ENCODE measurements at regions of chr1 and their contacts with region 1.

Region 1: GRCh38 chr1:53715478-53715877 is 23.5 kb downstream of the GLIS1 start:
- DNase-seq: peak; percentile 29 to 84
- H3K4me3 ChIP-seq: no peak overlapping the region
- H3K27ac ChIP-seq: no peak overlapping the region
- H3K4me1 ChIP-seq: no peaks in the 10 kb centered on the region; a peak in 3 of 7 replicates
- H3K27me3 ChIP-seq: no peaks in the 10 kb centered on the region
- CTCF ChIP-seq: peak; percentile 66 to 90 (median 78)
- EP300 ChIP-seq: no peak
- POLR2A ChIP-seq: no peak
- RAD21 ChIP-seq: peak; percentile 45 to 64

Region 2: DNA sequence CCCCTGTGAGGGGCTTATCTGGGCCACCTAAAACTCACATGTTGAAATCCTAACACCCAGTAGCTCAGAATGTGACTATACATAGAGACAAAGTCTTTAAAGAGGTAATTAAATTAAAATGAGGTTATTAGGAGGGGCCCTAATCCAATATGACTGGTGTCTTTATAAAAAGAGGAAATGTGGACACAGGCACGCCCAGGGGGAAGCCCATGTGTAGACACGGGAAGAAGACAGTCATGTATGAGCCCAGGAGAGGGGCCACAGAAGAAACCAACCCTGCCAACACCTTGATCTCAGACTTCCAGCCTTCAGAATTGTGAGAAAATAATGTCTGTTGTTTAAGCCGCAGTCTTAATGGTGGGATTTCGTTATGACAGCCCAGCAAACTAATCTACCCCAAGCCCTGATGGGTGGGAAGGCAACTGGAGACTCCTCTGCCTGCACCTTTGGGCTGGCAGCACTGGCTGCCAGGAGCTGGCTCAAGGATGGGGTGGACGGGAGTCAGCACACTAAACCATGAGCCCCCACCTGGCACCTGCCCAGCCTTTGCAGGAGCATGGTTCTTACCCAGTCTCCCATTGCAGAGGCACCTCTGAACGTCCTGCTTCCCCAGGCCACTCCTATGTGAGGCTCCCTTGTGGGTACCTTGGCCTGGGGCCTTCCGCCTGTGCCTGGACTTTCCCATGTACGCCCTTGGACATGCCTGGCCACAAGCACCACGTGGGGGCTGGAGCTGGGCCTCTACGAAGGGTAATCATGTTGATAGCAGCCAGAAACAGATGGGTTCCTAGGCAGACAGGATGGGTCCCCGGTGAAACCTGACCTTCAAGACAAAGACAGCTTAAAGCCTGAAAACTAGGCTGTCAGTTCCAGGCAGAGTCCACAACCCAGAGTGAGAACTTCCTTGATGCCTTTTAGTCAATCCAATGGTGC is 313.4 kb before region 1 on chr1:
- CTCF ChIA-PET with region 1: no interaction called
- POLR2A ChIA-PET with region 1: no interaction called
- DNase-seq: no peak
- H3K4me3 ChIP-seq: no peak overlapping the region
- H3K27ac ChIP-seq: no peak overlapping the region
- H3K4me1 ChIP-seq: peaks cover 0 to 6% (median 5%) of the 10 kb centered on the region in 4 experiments; a peak in 4 of 7 replicates
- H3K27me3 ChIP-seq: peaks cover 0 to 4% (median under 1%) of the 10 kb centered on the region in 4 experiments; a peak in 1 of 7 replicates
- CTCF ChIP-seq: no peak
- EP300 ChIP-seq: no peak
- POLR2A ChIP-seq: no peak
- RAD21 ChIP-seq: no peak

Region 3: GRCh38 chr1:53606651-53607051 is 108.8 kb before region 1 on chr1:
- CTCF ChIA-PET with region 1: no interaction called
- POLR2A ChIA-PET with region 1: no interaction called
- DNase-seq: peak in 1 of 2 experiments; percentile 65
- H3K4me3 ChIP-seq: no peak overlapping the region
- H3K27ac ChIP-seq: no peak overlapping the region
- H3K4me1 ChIP-seq: peaks cover 0 to 6% (median 4%) of the 10 kb centered on the region in 4 experiments; a peak in 5 of 7 replicates
- H3K27me3 ChIP-seq: peaks cover 0 to 7% (median 0%) of the 10 kb centered on the region in 4 experiments; a peak in 3 of 7 replicates
- CTCF ChIP-seq: no peak
- EP300 ChIP-seq: no peak
- POLR2A ChIP-seq: no peak
- RAD21 ChIP-seq: no peak; a peak in 1 of 4 replicates

Region 4: DNA sequence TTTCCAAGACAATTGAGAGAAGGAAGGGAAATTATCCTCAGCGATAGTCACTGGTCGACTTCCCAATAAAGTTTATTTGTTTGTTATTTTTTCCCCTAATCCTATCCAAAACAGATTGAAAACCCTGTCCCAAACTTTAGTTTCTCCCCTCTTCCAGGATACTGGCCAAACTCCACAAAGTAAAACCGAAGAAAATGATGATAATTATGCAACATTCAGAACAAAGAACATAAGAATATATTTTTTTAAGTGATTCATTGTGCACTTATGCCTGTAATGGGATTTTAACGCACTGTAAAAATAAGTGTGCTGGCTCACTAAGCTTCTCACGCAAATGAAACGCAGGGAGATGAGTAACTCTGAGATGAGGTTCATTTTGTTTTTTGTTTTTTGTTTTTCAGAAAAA is 17.4 kb after region 1 on chr1:
- CTCF ChIA-PET with region 1: interaction called, 50 read pairs
- POLR2A ChIA-PET with region 1: no interaction called
- DNase-seq: no peak
- H3K4me3 ChIP-seq: no peak overlapping the region
- H3K27ac ChIP-seq: no peak overlapping the region
- H3K4me1 ChIP-seq: peaks cover 0 to under 1% (median under 1%) of the 10 kb centered on the region in 4 experiments; a peak in 2 of 7 replicates
- H3K27me3 ChIP-seq: peaks cover 19 to 27% (median 27%) of the 10 kb centered on the region in 4 experiments
- CTCF ChIP-seq: no peak
- EP300 ChIP-seq: no peak
- POLR2A ChIP-seq: no peak
- RAD21 ChIP-seq: no peak

Region 5: DNA sequence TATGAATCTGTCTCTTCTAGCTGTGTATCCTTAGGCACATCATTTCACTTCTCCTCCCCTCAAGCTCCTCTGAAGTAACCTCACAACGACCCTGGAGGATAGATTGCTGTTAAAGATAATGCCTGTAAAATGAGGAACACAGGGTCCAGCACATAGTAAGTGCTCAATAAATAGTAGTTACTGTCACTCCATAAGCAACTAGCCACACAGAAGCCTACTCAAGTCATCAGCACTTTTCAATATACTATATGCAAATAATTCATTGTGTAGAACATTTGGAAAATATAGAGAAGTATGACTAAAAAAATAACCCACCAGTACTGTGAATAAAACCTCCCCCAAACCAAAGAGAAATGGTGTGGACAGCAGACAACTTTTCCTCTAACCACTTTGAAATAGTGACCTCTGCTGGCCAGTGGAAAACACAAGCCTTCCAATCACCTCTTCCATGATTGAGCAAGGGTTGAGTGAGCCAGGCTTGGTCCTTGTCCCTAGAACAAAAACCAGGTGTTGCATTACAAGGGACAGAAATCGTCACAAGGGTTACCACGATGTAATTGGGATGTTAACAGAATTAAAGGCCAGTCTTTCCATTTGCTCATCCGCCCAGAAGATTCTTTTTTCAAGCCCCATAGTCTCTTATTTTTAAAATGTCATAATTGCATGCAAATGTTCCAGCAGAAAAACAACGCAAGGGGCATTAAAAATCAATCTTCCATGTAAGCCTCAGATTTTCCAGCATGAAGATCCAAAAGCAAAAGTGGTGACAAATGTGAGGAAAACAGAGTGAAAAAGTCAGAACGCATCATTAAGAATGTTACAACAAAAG is 39.2 kb after region 1 on chr1:
- CTCF ChIA-PET with region 1: interaction called, 24 read pairs
- POLR2A ChIA-PET with region 1: no interaction called
- DNase-seq: no peak
- H3K4me3 ChIP-seq: no peak overlapping the region
- H3K27ac ChIP-seq: no peak overlapping the region
- H3K4me1 ChIP-seq: no peaks in the 10 kb centered on the region
- H3K27me3 ChIP-seq: no peaks in the 10 kb centered on the region
- CTCF ChIP-seq: peak; percentile 26 to 82 (median 69)
- EP300 ChIP-seq: no peak
- POLR2A ChIP-seq: no peak
- RAD21 ChIP-seq: peak; percentile 76 to 77